ENCODE measurements at regions of chr15 and their contacts with region 1.

Region 1: DNA sequence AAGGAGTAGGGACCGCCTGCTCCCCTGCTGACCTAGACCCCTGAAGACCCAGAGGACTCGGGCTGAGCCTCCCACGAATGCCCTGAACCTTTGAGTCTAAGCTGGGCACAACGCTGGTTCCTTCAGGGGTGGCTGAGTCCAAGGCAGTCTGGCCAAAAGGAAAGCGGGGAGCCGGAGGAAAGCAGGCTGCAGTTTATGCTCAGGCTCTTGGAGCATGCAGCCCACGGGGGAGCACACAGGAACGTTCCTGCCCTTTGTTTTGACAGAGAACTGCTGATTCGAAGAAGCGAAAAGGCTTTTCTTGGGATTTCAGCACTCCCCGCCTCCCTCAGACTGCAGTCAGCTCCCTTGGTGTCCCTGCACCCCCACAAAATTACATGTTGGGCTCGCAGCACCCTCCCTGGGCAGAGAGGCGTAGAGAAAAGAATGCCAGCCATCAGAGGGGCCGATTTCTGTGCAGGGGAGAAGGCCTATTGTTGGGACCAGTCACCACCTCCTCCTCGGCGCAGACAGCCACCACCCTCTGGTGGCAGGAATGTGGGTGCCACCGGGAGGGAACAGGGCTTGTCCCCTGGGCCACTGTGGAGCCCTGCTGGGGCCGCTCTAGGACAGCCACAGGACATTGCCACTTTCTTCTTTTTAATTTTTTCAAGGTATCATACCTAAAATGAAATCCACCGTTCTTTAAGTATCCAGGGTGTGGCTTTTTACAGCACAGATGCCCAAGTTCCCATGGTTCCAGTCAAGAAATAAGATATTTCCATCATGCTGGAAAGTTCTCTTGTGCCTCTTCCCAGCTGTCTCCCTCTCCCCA is 72.2 kb downstream of the SMAD6 start:
- DNase-seq: peak in 9 of 10 donors; percentile 21 to 79 (median 57)
- H3K4me3 ChIP-seq: peak overlapping the region in 3 of 59 donors; percentile 7 to 19 (median 15)
- H3K27ac ChIP-seq: peak overlapping the region in 41 of 59 donors; percentile 0 to 77 (median 48)
- H3K27me3 ChIP-seq: no peaks in the 10 kb centered on the region
- CTCF ChIP-seq: peak; percentile 69 to 94 (median 85)

Region 2: GRCh38 chr15:66619151-66619903 is 154.9 kb before region 1 on chr15:
- intact Hi-C with region 1: loop called in 1 of 2 experiments (anchors 2 kb)
- DNase-seq: peak; percentile 34 to 73 (median 58)
- H3K4me3 ChIP-seq: no peak overlapping the region
- H3K27ac ChIP-seq: peak overlapping the region in 35 of 59 donors; percentile 3 to 88 (median 55)
- H3K27me3 ChIP-seq: peaks cover 0 to 34% (median 12%) of the 10 kb centered on the region in 45 donors
- CTCF ChIP-seq: peak; percentile 52 to 88 (median 81)

Region 3: GRCh38 chr15:66907826-66908743 is 133.9 kb after region 1 on chr15:
- intact Hi-C with region 1: no loop called
- DNase-seq: peak in 9 of 10 donors; percentile 7 to 63 (median 56)
- H3K4me3 ChIP-seq: no peak overlapping the region
- H3K27ac ChIP-seq: peak overlapping the region in 35 of 59 donors; percentile 4 to 76 (median 37)
- H3K27me3 ChIP-seq: no peaks in the 10 kb centered on the region
- CTCF ChIP-seq: no peak

Region 4: GRCh38 chr15:66923438-66923881 is 149.3 kb after region 1 on chr15:
- intact Hi-C with region 1: no loop called
- DNase-seq: no peak
- H3K4me3 ChIP-seq: no peak overlapping the region
- H3K27ac ChIP-seq: no peak overlapping the region
- H3K27me3 ChIP-seq: peaks cover 0 to 7% (median 0%) of the 10 kb centered on the region in 45 donors
- CTCF ChIP-seq: peak in 33 of 56 donors; percentile 11 to 39 (median 25)